Heart right ventricle (tissue), 16 donors: ENCODE measurements at regions of chr1 and their contacts with region 1.

Region 1: GRCh38 chr1:182877842-182878241 is 38.7 kb downstream of the DHX9 start:
- DNase-seq: no peak
- ATAC-seq: no peak
- H3K4me3 ChIP-seq: no peak overlapping the region
- H3K27ac ChIP-seq: no peak overlapping the region
- H3K4me1 ChIP-seq: no peaks in the 10 kb centered on the region
- H3K27me3 ChIP-seq: no peaks in the 10 kb centered on the region
- CTCF ChIP-seq: no peak

Region 2: DNA sequence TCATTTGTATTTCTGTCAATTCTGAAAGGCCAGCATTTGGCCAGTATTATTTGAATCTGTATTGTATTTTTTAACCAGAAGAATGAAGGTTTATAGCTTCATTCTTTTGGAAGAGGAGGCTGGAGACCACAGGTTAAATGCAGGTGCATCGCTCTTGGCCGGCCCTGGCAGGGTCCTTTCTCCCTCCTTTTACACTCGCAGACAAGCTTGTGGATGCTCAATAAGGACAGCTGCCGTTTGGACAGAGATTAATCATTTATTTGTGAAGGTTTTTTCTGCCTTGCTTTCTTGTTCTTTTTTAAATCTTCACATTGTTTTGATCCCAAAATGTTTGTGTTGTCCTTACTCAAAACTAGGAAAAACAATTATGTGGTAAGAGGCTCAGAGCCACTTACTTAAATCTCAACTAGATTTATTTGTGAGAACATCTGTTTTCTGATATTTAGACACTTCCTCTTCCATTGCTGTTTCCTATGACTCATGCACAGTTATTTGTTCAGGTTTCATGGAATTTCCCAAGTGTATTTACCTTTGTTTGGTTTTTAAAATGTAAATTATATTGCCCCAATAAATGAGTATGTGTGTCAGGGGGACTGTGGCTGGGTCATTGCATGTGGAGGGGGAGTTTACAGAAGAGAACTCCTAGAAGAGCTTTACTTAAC is 261.6 kb after region 1 on chr1:
- intact Hi-C with region 1: loop called in 2 of 10 experiments (anchors 10 kb)
- DNase-seq: no peak
- ATAC-seq: peak in 3 of 8 donors; percentile 49 to 68 (median 51)
- H3K4me3 ChIP-seq: no peak overlapping the region
- H3K27ac ChIP-seq: peak overlapping the region; percentile 6 to 83 (median 48)
- H3K4me1 ChIP-seq: peaks cover 0 to 49% (median 26%) of the 10 kb centered on the region in 9 donors
- H3K27me3 ChIP-seq: no peaks in the 10 kb centered on the region
- CTCF ChIP-seq: no peak

Region 3: DNA sequence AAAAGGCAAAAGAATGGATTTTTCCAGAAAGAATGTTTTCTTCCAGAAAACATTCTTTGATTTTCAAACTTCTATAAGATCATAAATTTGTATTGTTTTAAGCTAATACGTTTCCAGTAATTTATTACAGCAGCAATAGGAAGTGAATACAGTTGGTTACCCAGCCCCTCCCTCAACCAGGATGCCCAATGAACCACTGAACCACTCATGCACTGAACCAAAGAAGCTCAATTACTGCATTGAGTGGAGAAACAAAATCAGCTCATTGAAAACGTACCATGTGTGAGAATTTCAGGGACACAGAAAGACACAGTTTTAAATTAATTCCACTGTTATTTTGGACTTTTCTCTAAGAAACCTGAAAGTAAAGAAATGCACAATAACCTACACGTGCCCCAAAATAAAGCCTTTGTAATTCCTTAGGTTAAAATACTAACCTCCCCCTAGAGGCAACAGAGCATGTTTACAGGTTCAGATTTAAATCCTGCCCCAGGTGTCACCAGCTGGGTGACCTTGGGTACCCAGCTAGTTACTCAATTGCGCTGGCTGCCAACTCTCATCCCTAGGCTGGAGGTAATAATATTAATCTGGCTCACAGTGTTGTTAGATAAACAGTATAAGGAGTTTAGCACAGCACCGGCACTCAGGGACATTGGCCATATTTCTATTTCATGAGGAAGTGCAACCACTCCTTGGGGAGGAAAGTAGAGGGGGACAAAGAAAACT is 428.6 kb after region 1 on chr1:
- intact Hi-C with region 1: no loop called
- DNase-seq: peak in 1 of 2 donors; percentile 39
- ATAC-seq: peak in 6 of 8 donors; percentile 11 to 42 (median 30)
- H3K4me3 ChIP-seq: no peak overlapping the region
- H3K27ac ChIP-seq: peak overlapping the region in 8 of 10 donors; percentile 0 to 88 (median 75)
- H3K4me1 ChIP-seq: peaks cover 23 to 98% (median 66%) of the 10 kb centered on the region in 9 donors
- H3K27me3 ChIP-seq: no peaks in the 10 kb centered on the region
- CTCF ChIP-seq: peak in 6 of 9 donors; percentile 34 to 47 (median 38)

Region 4: DNA sequence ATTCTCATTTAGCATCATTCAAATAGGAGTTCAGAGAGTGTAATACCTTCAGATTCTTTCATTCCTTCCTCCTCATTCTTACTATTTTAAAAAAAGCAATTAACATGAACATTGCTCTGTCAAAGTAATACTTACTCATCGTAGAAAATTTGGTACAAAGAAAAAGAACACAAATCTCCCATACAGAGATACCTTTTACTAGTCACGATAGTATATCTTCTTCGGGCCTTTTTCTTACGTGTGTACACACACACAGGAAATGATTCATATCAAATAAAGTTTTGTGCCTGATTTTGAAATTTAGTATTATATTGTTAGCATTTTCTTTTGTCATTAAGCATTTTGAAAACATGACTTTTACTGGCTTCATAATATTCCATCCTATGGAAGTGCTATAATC is 659.6 kb after region 1 on chr1:
- intact Hi-C with region 1: loop called in 1 of 10 experiments (anchors 10 kb)
- DNase-seq: no peak
- ATAC-seq: no peak
- H3K4me3 ChIP-seq: no peak overlapping the region
- H3K27ac ChIP-seq: no peak overlapping the region
- H3K4me1 ChIP-seq: no peaks in the 10 kb centered on the region
- H3K27me3 ChIP-seq: no peaks in the 10 kb centered on the region
- CTCF ChIP-seq: no peak